ENCODE measurements at regions of chr4 and their contacts with region 1.

Region 1: GRCh38 chr4:142549726-142550463 is 296.2 kb downstream of the INPP4B start:
- DNase-seq: peak; percentile 67 to 98
- H3K4me3 ChIP-seq: no peak overlapping the region
- H3K27ac ChIP-seq: peak overlapping the region; percentile 99
- H3K4me1 ChIP-seq: peaks cover 48% of the 10 kb centered on the region
- H3K27me3 ChIP-seq: no peaks in the 10 kb centered on the region
- CTCF ChIP-seq: no peak

Region 2: DNA sequence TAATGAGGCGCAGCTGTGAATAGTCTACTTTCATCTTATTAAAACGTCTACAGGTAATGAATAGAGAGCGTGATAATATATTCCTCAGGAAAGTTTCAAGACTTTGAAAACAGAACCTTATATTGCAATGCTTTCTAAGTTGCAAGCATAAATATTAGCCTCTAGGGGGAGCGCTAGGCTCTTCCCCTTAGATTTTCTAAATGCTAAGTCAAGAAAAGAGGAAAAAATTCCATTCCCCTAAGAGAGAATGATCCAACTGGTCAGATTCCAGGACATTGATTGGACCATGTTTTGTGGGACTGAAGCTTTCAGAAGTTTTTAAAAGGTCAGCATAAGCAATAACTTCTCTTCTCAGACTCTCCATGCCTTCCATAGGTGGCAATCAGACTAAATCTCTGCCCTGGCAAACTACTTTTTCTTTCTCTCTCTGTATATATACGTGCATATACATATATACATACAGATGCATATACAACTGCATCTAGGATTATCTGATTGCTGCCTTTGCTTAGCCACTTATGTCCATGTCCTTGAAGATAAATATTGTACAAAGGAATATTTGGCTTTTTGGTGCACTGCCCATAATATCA is 196.7 kb before region 1 on chr4:
- CTCF ChIA-PET with region 1: no interaction called
- POLR2A ChIA-PET with region 1: interaction called, 3 read pairs
- intact Hi-C with region 1: loop called (anchors 1 kb)
- DNase-seq: peak; percentile 6 to 62
- H3K4me3 ChIP-seq: no peak overlapping the region
- H3K27ac ChIP-seq: peak overlapping the region; percentile 38; the same call in 1 of the 2 replicates
- H3K4me1 ChIP-seq: peaks cover 33% of the 10 kb centered on the region
- H3K27me3 ChIP-seq: no peaks in the 10 kb centered on the region
- CTCF ChIP-seq: peak; percentile 83

Region 3: GRCh38 chr4:142427456-142427855 is 122.4 kb before region 1 on chr4:
- CTCF ChIA-PET with region 1: no interaction called
- POLR2A ChIA-PET with region 1: no interaction called
- intact Hi-C with region 1: no loop called
- DNase-seq: no peak
- H3K4me3 ChIP-seq: no peak overlapping the region
- H3K27ac ChIP-seq: no peak overlapping the region
- H3K4me1 ChIP-seq: no peaks in the 10 kb centered on the region
- H3K27me3 ChIP-seq: no peaks in the 10 kb centered on the region
- CTCF ChIP-seq: no peak

Region 4: GRCh38 chr4:142516670-142517526 is 33.0 kb before region 1 on chr4:
- CTCF ChIA-PET with region 1: interaction called, 4 read pairs
- POLR2A ChIA-PET with region 1: no interaction called
- intact Hi-C with region 1: loop called (anchors 1 kb)
- DNase-seq: peak; percentile 6 to 75
- H3K4me3 ChIP-seq: no peak overlapping the region
- H3K27ac ChIP-seq: peak overlapping the region; percentile 72
- H3K4me1 ChIP-seq: peaks cover 21% of the 10 kb centered on the region
- H3K27me3 ChIP-seq: no peaks in the 10 kb centered on the region
- CTCF ChIP-seq: no peak

Region 5: DNA sequence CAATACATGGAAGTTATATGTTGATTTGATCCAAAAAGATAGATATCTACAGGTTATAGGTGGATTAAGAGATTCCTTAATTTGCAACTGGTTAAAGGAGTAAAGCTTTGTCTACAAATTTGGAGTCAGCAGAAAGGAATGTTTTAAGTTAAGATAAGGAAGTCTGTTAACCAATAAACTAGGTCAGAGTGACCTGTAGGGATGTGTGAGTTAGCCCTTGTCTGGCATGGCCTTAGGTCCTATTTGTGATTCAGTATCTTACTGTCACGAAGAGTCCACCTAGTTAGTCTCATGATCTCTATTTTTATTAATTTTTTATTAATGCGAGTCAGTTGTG is 65.4 kb after region 1 on chr4:
- CTCF ChIA-PET with region 1: interaction called, 3 read pairs
- POLR2A ChIA-PET with region 1: no interaction called
- intact Hi-C with region 1: loop called (anchors 5 kb)
- DNase-seq: peak; percentile 15 to 92
- H3K4me3 ChIP-seq: peak overlapping the region; percentile 32; the same call in 1 of the 2 replicates
- H3K27ac ChIP-seq: peak overlapping the region; percentile 92
- H3K4me1 ChIP-seq: peaks cover 35% of the 10 kb centered on the region
- H3K27me3 ChIP-seq: no peaks in the 10 kb centered on the region
- CTCF ChIP-seq: no peak

Region 6: DNA sequence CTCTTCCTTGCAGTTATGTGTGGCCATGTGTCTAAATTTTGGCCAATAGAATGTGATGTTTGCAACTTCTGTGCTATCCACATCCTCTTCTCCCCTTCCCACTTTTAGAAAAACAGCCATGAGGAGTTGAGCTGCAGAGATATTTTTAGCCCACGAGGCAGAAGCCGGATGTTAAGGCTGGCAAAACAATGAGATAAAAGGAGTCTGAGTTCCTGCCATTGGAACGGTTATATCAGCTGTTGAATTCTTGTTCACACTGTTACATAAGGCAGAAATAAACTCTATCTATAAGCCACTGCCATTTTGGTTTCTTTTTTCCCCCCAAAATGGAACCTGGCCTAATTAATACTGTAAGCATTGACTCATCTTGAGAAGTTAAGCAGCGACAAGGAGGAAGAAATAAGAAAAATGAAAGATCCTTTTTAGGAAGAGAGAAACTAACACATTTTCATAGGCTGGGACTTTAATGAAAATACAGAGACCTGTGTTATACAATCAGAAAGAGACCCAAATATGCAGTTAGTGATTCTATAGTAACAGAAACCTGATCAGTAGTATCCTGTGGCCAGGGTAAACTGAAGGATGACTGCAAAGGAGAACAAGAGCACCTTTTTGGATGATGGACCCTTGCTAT is 95.7 kb after region 1 on chr4:
- CTCF ChIA-PET with region 1: no interaction called
- POLR2A ChIA-PET with region 1: no interaction called
- intact Hi-C with region 1: no loop called
- DNase-seq: no peak
- H3K4me3 ChIP-seq: no peak overlapping the region
- H3K27ac ChIP-seq: no peak overlapping the region
- H3K4me1 ChIP-seq: no peaks in the 10 kb centered on the region
- H3K27me3 ChIP-seq: no peaks in the 10 kb centered on the region
- CTCF ChIP-seq: no peak

Region 7: GRCh38 chr4:142817442-142817841 is 267.5 kb after region 1 on chr4:
- CTCF ChIA-PET with region 1: no interaction called
- POLR2A ChIA-PET with region 1: no interaction called
- intact Hi-C with region 1: loop called (anchors 1 kb)
- DNase-seq: peak; percentile 59 to 80
- H3K4me3 ChIP-seq: peak overlapping the region; percentile 10; the same call in 1 of the 2 replicates
- H3K27ac ChIP-seq: peak overlapping the region; percentile 50
- H3K4me1 ChIP-seq: peaks cover 15% of the 10 kb centered on the region
- H3K27me3 ChIP-seq: no peaks in the 10 kb centered on the region
- CTCF ChIP-seq: no peak

Measured in PC-9 (cell line).